ENCODE measurements at regions of chr3 and their contacts with region 1.

Region 1: DNA sequence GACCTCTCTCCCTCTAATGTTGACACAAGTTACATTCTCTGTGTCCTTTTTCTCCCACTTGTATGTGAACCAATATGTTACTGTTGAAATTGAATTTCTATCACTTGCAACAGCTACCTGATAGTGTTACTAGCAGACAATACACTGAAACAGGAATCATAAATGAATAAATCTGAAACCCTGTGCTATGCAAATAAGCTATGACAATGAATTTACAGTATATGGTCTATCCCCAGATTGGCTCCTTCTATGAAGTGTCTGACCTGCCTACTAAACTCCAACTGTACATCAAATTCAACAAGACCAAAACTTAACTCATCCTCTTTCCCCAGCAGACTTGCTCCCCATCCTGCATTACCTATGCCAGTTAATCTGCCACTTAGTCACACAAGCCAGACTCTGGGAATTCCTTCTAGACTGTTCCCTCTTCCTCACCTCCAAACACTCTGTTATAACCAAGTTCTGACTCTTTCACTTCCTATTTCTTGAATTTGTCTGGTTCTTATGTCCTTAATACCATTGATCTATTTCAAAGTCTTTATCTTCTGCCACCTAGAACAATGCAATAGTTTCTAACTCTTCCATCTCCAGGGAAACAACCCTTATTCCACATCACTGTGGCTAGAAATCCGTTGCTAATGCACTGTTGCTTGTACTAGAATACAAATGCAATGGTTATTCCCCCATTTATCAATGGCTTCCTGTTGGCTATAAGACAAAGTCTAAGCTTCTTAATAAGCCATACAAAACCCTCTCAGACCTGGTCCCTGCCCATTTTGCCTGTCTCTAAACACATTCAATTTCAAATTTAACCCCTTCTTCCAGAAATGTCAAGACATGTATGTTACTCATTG is 13.4 kb upstream of the ZNF639 start:
- DNase-seq: no peak
- H3K4me3 ChIP-seq: no peak overlapping the region
- H3K27ac ChIP-seq: no peak overlapping the region
- H3K27me3 ChIP-seq: no peaks in the 10 kb centered on the region
- CTCF ChIP-seq: no peak

Region 2: DNA sequence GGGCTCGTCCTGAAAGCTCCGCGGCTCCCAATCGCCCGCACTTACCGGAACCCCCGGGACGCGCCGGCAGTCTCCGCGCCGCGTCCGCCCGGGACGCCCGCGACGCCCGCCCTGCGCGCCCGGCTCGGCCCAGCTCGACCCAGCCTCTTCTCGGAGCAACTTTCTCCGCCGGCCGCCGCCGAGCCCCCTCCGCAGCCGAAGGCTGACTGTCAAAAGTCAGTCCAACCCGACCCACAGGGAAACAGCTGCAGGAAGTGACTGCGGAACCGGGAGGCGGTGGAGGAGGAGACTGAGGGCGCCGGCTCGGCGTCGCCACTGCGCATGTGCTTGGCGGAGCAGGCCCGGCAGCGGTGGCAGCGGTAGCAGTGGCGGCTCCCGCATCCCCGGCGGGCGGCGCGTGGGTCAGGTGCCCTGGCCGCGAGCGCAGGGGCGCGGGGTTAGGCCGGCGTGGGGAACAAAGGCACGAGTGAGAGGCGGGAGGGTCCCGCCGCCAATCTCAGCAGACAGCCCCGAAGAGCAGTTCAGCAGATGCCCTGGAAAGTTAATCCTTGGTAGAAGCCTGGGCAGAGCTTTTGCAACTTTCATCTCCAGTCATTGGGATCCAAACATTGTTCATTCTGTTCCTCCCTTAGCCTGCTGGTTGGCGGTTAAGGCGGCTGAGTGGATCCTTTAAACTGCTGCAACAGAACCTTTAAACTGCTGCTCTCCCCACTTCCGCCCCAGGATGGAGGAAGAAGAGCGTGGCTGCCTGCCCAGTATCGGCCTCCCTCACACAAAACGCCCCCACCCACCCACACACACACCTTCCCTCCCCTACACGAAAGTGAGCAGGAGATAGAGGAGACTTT is 237.7 kb before region 1 on chr3 and contains the start of gene ZMAT3:
- CTCF ChIA-PET with region 1: interaction called, 29 read pairs
- POLR2A ChIA-PET with region 1: no interaction called
- DNase-seq: peak; percentile 54
- H3K4me3 ChIP-seq: peak within 1 kb of the TSS; percentile 90
- H3K27ac ChIP-seq: peak within 1 kb of the TSS; percentile 84
- H3K27me3 ChIP-seq: no peaks in the 10 kb centered on the region
- CTCF ChIP-seq: no peak
- polyA plus RNA-seq, gene ZMAT3: 46.2 and 51.9 TPM in 2 replicates

Region 3: DNA sequence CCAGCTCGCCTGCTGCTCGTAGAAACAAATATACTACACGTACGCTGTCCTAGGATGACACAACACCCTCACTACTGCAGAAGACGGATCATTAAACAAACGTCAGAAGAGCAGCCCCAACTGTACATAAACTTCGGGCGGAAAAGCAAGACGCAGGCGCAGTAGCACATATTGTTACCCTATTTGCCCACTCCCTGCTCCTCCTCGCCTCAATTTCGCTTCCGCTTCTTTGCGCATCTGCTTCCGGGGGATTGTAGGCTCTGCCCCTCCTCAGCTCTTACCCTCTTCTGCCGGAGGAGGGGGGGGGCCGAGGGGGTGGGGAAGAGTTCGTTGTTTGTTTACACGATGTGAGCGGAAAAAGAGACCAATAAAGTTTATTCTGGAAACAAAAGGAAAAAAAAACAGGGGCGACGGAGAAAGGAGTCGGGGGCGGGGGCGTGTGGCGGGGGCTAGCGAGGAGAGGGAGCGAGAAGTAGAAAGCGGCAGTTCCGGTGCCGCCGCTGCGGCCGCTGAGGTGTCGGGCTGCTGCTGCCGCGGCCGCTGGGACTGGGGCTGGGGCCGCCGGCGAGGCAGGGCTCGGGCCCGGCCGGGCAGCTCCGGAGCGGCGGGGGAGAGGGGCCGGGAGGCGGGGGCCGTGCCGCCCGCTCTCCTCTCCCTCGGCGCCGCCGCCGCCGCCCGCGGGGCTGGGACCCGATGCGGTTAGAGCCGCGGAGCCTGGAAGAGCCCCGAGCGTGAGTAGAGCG is 161.4 kb before region 1 on chr3 and contains the start of gene PIK3CA:
- CTCF ChIA-PET with region 1: interaction called, 31 read pairs
- POLR2A ChIA-PET with region 1: no interaction called
- DNase-seq: peak; percentile 97
- H3K4me3 ChIP-seq: peak within 1 kb of the TSS; percentile 78
- H3K27ac ChIP-seq: peak within 1 kb of the TSS; percentile 76
- H3K27me3 ChIP-seq: no peaks in the 10 kb centered on the region
- CTCF ChIP-seq: no peak
- polyA plus RNA-seq, gene PIK3CA: 13.9 and 21.4 TPM in 2 replicates

Measured in AG04450 (cell line).